Brain microvascular endothelial cell (primary cell): ENCODE measurements at regions of chr10 and their contacts with region 1.

Region 1: DNA sequence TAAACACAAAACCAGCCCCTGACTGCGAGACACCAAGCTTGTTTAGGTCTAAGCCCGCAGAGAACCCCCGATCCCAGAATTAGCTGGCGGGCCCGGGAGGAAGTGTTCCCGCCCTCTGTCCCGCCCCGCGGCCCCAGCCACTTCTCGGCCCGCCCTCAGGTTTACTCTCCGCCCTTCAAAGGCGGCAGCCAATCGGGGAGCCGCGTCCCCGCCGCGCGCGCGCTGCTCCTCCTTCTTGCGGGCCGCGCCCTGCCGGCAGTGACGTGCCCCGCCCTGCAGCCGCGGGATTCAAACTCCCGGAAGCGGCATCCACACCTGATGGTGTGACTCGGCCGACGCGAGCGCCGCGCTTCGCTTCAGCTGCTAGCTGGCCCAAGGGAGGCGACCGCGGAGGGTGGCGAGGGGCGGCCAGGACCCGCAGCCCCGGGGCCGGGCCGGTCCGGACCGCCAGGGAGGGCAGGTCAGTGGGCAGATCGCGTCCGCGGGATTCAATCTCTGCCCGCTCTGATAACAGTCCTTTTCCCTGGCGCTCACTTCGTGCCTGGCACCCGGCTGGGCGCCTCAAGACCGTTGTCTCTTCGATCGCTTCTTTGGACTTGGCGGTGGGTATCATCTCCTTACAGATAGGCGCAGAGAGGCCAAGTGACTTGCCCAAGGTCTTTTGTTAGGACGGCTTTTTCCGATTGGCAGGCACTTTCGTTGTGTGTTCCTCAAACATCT is at the start of gene CEP55:
- DNase-seq: peak; percentile 87
- H3K4me3 ChIP-seq: peak within 1 kb of the TSS; percentile 83
- H3K27ac ChIP-seq: no peak within 1 kb of the TSS
- H3K27me3 ChIP-seq: no peaks in the 10 kb centered on the region
- CTCF ChIP-seq: no peak

Region 2: DNA sequence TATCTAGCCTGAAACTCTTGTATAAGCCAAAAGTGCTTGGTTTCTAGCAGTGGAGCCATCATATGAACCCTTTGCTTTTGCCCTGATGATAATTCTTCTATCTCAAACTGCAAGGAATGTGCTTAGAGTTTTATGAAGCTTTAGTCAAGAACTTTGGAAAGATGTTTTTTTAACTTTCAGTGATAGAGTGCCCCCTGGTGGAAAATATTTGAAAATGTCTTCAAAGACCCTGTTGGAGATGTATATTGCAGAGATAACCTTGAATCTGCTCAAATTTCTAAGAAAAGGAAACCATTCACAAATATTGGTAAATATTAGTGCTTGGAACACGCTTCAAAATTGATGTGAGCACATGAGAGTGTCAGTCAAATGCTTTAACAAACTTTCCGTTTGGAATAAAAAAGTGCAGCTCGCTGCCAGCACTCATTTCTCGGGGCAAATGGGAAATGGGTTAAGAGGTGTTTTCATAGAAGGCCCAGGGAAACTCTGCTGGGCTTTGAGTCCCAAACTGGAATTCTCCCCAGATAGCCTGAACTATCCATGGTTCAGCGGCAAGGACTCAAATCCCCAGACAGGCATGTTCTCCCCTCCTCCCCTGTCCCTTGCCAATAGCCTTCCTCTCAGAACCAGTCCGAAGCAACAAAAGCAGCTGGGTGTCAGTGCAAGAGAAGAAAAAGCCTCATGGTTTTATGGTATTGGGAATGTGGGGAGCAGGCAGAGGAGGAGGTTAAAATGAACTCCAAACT is 143.7 kb before region 1 on chr10:
- in situ Hi-C with region 1: loop called (anchors 25 kb)
- DNase-seq: peak; percentile 47
- H3K4me3 ChIP-seq: no peak overlapping the region
- H3K27ac ChIP-seq: no peak overlapping the region
- H3K27me3 ChIP-seq: no peaks in the 10 kb centered on the region
- CTCF ChIP-seq: peak; percentile 22

Region 3: GRCh38 chr10:93386631-93387369 is 109.7 kb before region 1 on chr10:
- in situ Hi-C with region 1: no loop called
- DNase-seq: peak; percentile 25
- H3K4me3 ChIP-seq: no peak overlapping the region
- H3K27ac ChIP-seq: peak overlapping the region; percentile 39
- H3K27me3 ChIP-seq: no peaks in the 10 kb centered on the region
- CTCF ChIP-seq: no peak